ENCODE measurements at regions of chr1 and their contacts with region 1.

Region 1: GRCh38 chr1:63773815-63774616 is at the start of gene ROR1:
- DNase-seq: peak; percentile 87
- H3K4me3 Mint-ChIP-seq: peak within 1 kb of the TSS; percentile 76
- H3K27ac Mint-ChIP-seq: no peak within 1 kb of the TSS
- H3K4me1 Mint-ChIP-seq: peaks cover 17% of the 10 kb centered on the region
- H3K27me3 Mint-ChIP-seq: peaks cover 52% of the 10 kb centered on the region
- total RNA-seq, gene ROR1: 0.10 to 0.14 TPM

Region 2: GRCh38 chr1:63615768-63616420 is 158.1 kb before region 1 on chr1:
- CTCF ChIA-PET with region 1: interaction called, 3 read pairs
- intact Hi-C with region 1: loop called (anchors 5 kb)
- DNase-seq: peak; percentile 58
- H3K4me3 Mint-ChIP-seq: no peak overlapping the region
- H3K27ac Mint-ChIP-seq: no peak overlapping the region
- H3K4me1 Mint-ChIP-seq: peaks cover 4% of the 10 kb centered on the region
- H3K27me3 Mint-ChIP-seq: no peaks in the 10 kb centered on the region

Region 3: GRCh38 chr1:63794939-63795378 is 20.9 kb after region 1 on chr1:
- CTCF ChIA-PET with region 1: no interaction called
- intact Hi-C with region 1: no loop called
- DNase-seq: no peak
- H3K4me3 Mint-ChIP-seq: no peak overlapping the region
- H3K27ac Mint-ChIP-seq: no peak overlapping the region
- H3K4me1 Mint-ChIP-seq: no peaks in the 10 kb centered on the region
- H3K27me3 Mint-ChIP-seq: no peaks in the 10 kb centered on the region

Measured in activated naive CD4-positive, alpha-beta T cell treated with anti-CD3 and anti-CD28 coated beads for 36 hours (primary cell).